Posterior vena cava (tissue), 2 donors: ENCODE measurements at regions of chr2 and their contacts with region 1.

Region 1: GRCh38 chr2:173027181-173028128 is 48.2 kb upstream of the MAP3K20 start:
- DNase-seq: no peak

Region 2: DNA sequence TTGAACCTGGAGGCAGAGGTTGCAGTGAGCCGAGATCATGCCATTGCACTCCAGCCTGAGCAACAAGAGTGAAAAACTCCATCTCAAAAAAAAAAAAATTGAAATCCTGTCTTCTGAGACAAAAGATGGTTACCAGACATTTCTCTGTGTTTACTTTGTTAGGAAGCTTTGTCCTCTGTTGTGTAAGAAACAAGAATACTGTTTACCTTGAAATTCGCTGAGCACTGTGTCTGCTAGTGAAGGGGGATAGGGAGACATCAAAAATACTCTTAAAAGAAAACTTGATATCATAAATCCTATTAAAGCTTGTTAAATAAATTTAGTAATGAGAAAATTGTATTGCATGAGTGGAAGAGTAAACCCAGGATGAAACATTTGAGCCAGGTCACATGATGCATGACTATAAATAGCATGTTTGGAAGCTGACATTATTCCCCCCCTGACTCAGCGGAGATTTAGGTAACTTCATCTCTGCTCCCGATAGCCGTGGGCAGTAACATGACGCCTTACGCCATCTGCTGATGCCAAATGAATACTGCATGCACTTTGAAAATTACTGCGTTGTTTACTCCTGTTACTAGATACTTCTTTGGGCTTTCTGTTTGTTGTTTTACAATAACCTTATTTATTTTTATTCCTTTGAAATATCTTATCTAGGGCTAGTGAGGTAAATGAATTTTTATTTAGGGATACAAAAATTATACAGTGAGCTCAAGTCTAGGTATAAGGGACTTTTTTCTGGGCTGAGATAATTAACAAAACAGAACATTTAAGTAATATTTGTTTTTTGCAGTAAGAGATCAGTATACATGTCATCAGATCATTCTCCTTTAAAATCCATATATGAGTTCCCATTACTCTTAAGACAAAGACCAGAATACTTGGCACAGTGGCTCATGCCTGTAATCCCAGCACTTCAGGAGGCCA is 183.1 kb after region 1 on chr2:
- intact Hi-C with region 1: loop called in 1 of 2 experiments (anchors 5 kb)
- DNase-seq: no peak